Cardiac septum (tissue), 1 donor: ENCODE measurements at regions of chr22 and their contacts with region 1.

Region 1: DNA sequence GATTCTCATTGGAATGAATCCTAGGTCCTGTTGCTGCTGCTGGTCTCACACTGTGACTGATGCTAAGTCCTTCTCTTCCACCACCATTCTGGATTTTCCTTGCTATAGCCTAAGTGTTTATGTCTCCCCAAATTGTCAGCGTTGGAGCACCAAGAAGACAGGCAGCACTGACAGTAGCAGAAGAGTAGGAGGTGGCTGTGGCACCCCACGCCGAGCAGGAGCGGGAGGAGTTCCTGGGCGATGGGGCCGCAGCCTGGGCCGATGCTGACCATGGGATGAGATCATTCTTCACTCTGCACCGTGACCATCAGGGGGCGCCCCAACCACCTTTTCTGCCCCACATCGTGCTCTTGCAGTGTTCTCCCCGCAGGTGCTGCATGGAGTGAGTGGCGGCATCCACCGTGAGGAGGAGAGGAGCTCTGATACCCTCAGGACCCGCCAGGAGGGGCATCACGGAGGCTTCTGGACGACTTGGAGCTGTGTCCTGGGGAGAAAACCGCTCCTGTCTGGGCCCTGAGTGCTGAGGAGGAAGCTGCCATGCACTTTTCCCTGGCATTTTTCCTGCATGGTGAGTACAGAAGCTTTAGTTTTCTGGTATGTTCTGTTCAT is 57.0 kb downstream of the LRRC74B start:
- DNase-seq: peak; percentile 82

Region 2: GRCh38 chr22:20885557-20886323 is 217.0 kb before region 1 on chr22:
- intact Hi-C with region 1: loop called (anchors 10 kb)
- DNase-seq: peak; percentile 91

Region 3: DNA sequence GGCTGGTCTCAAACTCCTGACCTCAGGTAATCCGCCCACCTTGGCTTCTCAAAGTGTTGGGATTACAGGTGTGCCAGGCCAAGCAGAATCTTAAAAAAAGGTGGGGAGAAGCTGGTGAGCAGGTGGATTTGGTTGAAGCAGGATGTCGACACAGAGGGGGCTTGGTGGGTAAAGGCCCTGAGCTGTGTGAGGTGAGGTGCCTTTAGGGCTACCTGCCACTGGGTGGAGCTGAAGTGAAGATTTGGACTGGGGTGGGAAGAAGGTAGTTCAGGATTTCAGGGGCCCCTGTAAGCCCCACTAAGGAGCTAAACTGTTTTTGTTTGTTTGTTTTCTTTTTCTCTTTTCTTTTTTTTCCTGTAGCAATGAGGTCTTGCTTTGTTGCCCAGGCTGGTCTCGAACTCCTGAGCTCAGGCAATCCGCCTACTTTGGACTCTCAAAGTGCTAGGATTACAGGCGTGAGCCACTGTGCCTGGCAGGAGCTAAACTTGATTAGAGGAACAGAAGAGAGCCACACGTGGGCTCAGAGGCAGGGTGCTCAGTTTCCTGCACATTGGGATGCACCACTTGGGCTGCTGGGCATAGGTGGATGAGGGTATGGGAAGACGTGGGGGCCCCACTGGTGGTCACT is 81.8 kb before region 1 on chr22:
- intact Hi-C with region 1: loop called (anchors 10 kb)
- DNase-seq: no peak

Region 4: GRCh38 chr22:21055587-21056319 is 47.0 kb before region 1 on chr22:
- intact Hi-C with region 1: no loop called
- DNase-seq: no peak